Mammary epithelial cell (primary cell): ENCODE measurements at regions of chr13 and their contacts with region 1.

Region 1: GRCh38 chr13:45393941-45394570 is 24.1 kb downstream of the SLC25A30 start:
- DNase-seq: peak; percentile 45
- H3K4me3 ChIP-seq: no peak overlapping the region
- H3K27ac ChIP-seq: no peak overlapping the region
- H3K4me1 ChIP-seq: no peaks in the 10 kb centered on the region
- H3K27me3 ChIP-seq: no peaks in the 10 kb centered on the region
- CTCF ChIP-seq: peak; percentile 76 to 80

Region 2: GRCh38 chr13:44969551-44970484 is 424.2 kb before region 1 on chr13:
- CTCF ChIA-PET with region 1: no interaction called
- dilution Hi-C with region 1: no loop called
- in situ Hi-C with region 1: no loop called
- intact Hi-C with region 1: loop called (anchors 5 kb)
- DNase-seq: peak; percentile 28
- H3K4me3 ChIP-seq: no peak overlapping the region
- H3K27ac ChIP-seq: no peak overlapping the region
- H3K4me1 ChIP-seq: peaks cover 3% of the 10 kb centered on the region
- H3K27me3 ChIP-seq: no peaks in the 10 kb centered on the region
- CTCF ChIP-seq: peak; percentile 68 to 72

Region 3: GRCh38 chr13:45310341-45311125 is 83.5 kb before region 1 on chr13:
- CTCF ChIA-PET with region 1: no interaction called
- dilution Hi-C with region 1: no loop called
- in situ Hi-C with region 1: no loop called
- intact Hi-C with region 1: loop called (anchors 1 kb)
- DNase-seq: no peak
- H3K4me3 ChIP-seq: no peak overlapping the region
- H3K27ac ChIP-seq: no peak overlapping the region
- H3K4me1 ChIP-seq: peaks cover 16% of the 10 kb centered on the region
- H3K27me3 ChIP-seq: no peaks in the 10 kb centered on the region
- CTCF ChIP-seq: no peak

Region 4: GRCh38 chr13:45340926-45341750 is 52.9 kb before region 1 on chr13 and contains the start of gene TPT1:
- CTCF ChIA-PET with region 1: no interaction called
- dilution Hi-C with region 1: loop called (anchors 10 kb)
- in situ Hi-C with region 1: no loop called
- intact Hi-C with region 1: loop called (anchors 2 kb)
- DNase-seq: peak; percentile 99
- H3K4me3 ChIP-seq: peak within 1 kb of the TSS; percentile 77 to 96 (median 88)
- H3K27ac ChIP-seq: peak within 1 kb of the TSS; percentile 94
- H3K4me1 ChIP-seq: peaks cover 39% of the 10 kb centered on the region
- H3K27me3 ChIP-seq: no peaks in the 10 kb centered on the region
- CTCF ChIP-seq: no peak
- total RNA-seq, gene TPT1: 1,890 to 3,324 TPM

Region 5: GRCh38 chr13:45500492-45501174 is 106.6 kb after region 1 on chr13:
- CTCF ChIA-PET with region 1: no interaction called
- dilution Hi-C with region 1: loop called (anchors 5 kb)
- in situ Hi-C with region 1: no loop called
- intact Hi-C with region 1: no loop called
- DNase-seq: peak; percentile 96
- H3K4me3 ChIP-seq: peak overlapping the region in 1 of 3 experiments; percentile 28
- H3K27ac ChIP-seq: peak overlapping the region; percentile 96
- H3K4me1 ChIP-seq: peaks cover 32% of the 10 kb centered on the region
- H3K27me3 ChIP-seq: no peaks in the 10 kb centered on the region
- CTCF ChIP-seq: no peak

Region 6: GRCh38 chr13:45674908-45675307 is 280.9 kb after region 1 on chr13:
- CTCF ChIA-PET with region 1: no interaction called
- dilution Hi-C with region 1: loop called (anchors 10 kb)
- in situ Hi-C with region 1: no loop called
- intact Hi-C with region 1: no loop called
- DNase-seq: peak; percentile 75
- H3K4me3 ChIP-seq: no peak overlapping the region
- H3K27ac ChIP-seq: no peak overlapping the region
- H3K4me1 ChIP-seq: peaks cover 8% of the 10 kb centered on the region
- H3K27me3 ChIP-seq: no peaks in the 10 kb centered on the region
- CTCF ChIP-seq: no peak